ENCODE measurements at regions of chr5 and their contacts with region 1.

Region 1: GRCh38 chr5:173868076-173868880 is 19.9 kb upstream of the CPEB4 start:
- DNase-seq: peak; percentile 95
- ATAC-seq: peak; percentile 77
- H3K4me3 ChIP-seq: peak overlapping the region; percentile 5; the same call in 1 of the 2 replicates
- H3K27ac ChIP-seq: peak overlapping the region; percentile 80
- H3K4me1 ChIP-seq: peaks cover 27% of the 10 kb centered on the region
- H3K27me3 ChIP-seq: no peaks in the 10 kb centered on the region
- CTCF ChIP-seq: no peak

Region 2: GRCh38 chr5:173823711-173824528 is 44.4 kb before region 1 on chr5:
- CTCF ChIA-PET with region 1: no interaction called
- POLR2A ChIA-PET with region 1: no interaction called
- intact Hi-C with region 1: loop called (anchors 5 kb)
- DNase-seq: peak; percentile 98
- ATAC-seq: peak; percentile 90
- H3K4me3 ChIP-seq: peak overlapping the region; percentile 34; the same call in 1 of the 2 replicates
- H3K27ac ChIP-seq: peak overlapping the region; percentile 53
- H3K4me1 ChIP-seq: peaks cover 32% of the 10 kb centered on the region
- H3K27me3 ChIP-seq: no peaks in the 10 kb centered on the region
- CTCF ChIP-seq: no peak

Measured in PC-3 (cell line).